ENCODE measurements at regions of chr6 and their contacts with region 1.

Region 1: DNA sequence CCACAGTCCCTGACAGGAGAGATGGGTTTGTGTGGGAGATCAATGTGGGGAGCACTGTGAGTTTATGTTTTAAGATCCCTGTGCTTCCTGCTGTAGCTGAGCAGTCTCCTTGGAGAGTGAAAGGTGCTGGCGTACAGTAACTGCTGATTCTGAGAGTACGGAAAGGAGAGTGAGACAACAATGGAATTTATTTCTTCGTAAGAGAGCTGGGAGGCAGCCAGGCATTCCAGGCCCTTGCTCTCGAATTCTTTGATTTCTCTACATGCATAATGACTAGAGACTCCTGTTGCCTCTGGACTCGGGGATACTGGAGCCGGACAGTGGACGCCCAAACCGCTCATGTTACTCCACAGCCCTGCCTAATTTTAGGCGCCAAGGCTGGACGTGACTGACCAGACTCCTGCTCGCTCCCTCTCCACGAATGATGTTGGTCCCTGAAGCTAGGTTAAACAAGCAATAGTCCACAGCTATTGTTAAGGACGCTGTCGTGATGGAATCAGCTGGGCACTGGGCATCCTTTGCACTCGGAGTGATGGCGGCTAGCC is 131.0 kb upstream of the PHACTR1 start:
- DNase-seq: peak; percentile 96
- H3K4me3 ChIP-seq: peak overlapping the region in 1 of 3 experiments; percentile 25
- H3K27ac ChIP-seq: peak overlapping the region; percentile 100
- H3K4me1 ChIP-seq: peaks cover 51% of the 10 kb centered on the region
- H3K27me3 ChIP-seq: no peaks in the 10 kb centered on the region
- CTCF ChIP-seq: no peak
- POLR2A ChIP-seq: peak; percentile 49

Region 2: GRCh38 chr6:11609315-11610071 is 976.1 kb before region 1 on chr6:
- CTCF ChIA-PET with region 1: no interaction called
- POLR2A ChIA-PET with region 1: interaction called, 4 read pairs
- dilution Hi-C with region 1: no loop called
- intact Hi-C with region 1: loop called (anchors 1 kb)
- DNase-seq: peak; percentile 99
- H3K4me3 ChIP-seq: peak overlapping the region in 2 of 3 experiments; percentile 30 to 86
- H3K27ac ChIP-seq: peak overlapping the region; percentile 99
- H3K4me1 ChIP-seq: peaks cover 78% of the 10 kb centered on the region
- H3K27me3 ChIP-seq: no peaks in the 10 kb centered on the region
- CTCF ChIP-seq: no peak
- POLR2A ChIP-seq: no peak

Region 3: GRCh38 chr6:12313992-12314805 is 271.4 kb before region 1 on chr6:
- CTCF ChIA-PET with region 1: interaction called, 3 read pairs
- POLR2A ChIA-PET with region 1: no interaction called
- dilution Hi-C with region 1: no loop called
- intact Hi-C with region 1: loop called (anchors 1 kb)
- DNase-seq: peak; percentile 89
- H3K4me3 ChIP-seq: no peak overlapping the region
- H3K27ac ChIP-seq: peak overlapping the region; percentile 77
- H3K4me1 ChIP-seq: peaks cover 23% of the 10 kb centered on the region
- H3K27me3 ChIP-seq: no peaks in the 10 kb centered on the region
- CTCF ChIP-seq: no peak
- POLR2A ChIP-seq: no peak

Region 4: GRCh38 chr6:12483712-12484111 is 101.9 kb before region 1 on chr6:
- CTCF ChIA-PET with region 1: interaction called, 5 read pairs
- POLR2A ChIA-PET with region 1: no interaction called
- dilution Hi-C with region 1: loop called (anchors 25 kb)
- intact Hi-C with region 1: loop called (anchors 1 kb)
- DNase-seq: peak; percentile 90
- H3K4me3 ChIP-seq: peak overlapping the region in 1 of 3 experiments; percentile 9
- H3K27ac ChIP-seq: peak overlapping the region; percentile 74
- H3K4me1 ChIP-seq: peaks cover 54% of the 10 kb centered on the region
- H3K27me3 ChIP-seq: no peaks in the 10 kb centered on the region
- CTCF ChIP-seq: no peak
- POLR2A ChIP-seq: peak; percentile 56

Region 5: DNA sequence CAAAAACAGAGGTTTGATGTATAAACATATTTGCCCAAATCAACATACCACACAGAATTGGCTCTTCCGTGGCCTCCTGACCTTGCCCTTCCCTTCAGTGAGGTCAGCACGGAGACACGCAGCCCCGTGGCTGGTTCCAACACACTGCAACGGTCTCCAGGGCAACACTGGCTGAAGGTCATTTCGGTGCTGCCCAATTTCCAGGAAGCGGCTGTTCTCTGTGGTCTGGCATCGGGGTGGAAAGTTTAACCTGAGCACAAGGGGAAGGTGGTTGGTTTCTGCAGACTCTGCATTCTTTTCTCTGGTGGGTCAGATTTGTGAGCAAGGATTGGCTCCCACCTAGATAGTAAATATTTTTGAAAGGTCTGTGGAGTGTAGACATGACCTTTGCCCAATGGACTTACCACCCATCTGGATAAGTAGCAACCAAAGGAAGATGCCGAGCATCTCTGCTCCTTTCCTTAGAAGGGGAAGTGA is 46.6 kb before region 1 on chr6:
- CTCF ChIA-PET with region 1: interaction called, 3 read pairs
- POLR2A ChIA-PET with region 1: interaction called, 4 read pairs
- dilution Hi-C with region 1: no loop called
- intact Hi-C with region 1: loop called (anchors 1 kb)
- DNase-seq: peak; percentile 89
- H3K4me3 ChIP-seq: no peak overlapping the region
- H3K27ac ChIP-seq: peak overlapping the region; percentile 87
- H3K4me1 ChIP-seq: peaks cover 51% of the 10 kb centered on the region
- H3K27me3 ChIP-seq: no peaks in the 10 kb centered on the region
- CTCF ChIP-seq: no peak
- POLR2A ChIP-seq: peak; percentile 38

Region 6: GRCh38 chr6:12555267-12555666 is 30.3 kb before region 1 on chr6:
- CTCF ChIA-PET with region 1: no interaction called
- POLR2A ChIA-PET with region 1: no interaction called
- dilution Hi-C with region 1: no loop called
- intact Hi-C with region 1: no loop called
- DNase-seq: no peak
- H3K4me3 ChIP-seq: no peak overlapping the region
- H3K27ac ChIP-seq: no peak overlapping the region
- H3K4me1 ChIP-seq: no peaks in the 10 kb centered on the region
- H3K27me3 ChIP-seq: no peaks in the 10 kb centered on the region
- CTCF ChIP-seq: no peak
- POLR2A ChIP-seq: no peak

Region 7: GRCh38 chr6:12572896-12573827 is 12.4 kb before region 1 on chr6:
- CTCF ChIA-PET with region 1: interaction called, 17 read pairs
- POLR2A ChIA-PET with region 1: interaction called, 17 read pairs
- dilution Hi-C with region 1: no loop called
- intact Hi-C with region 1: loop called (anchors 1 kb)
- DNase-seq: peak; percentile 92
- H3K4me3 ChIP-seq: peak overlapping the region in 1 of 3 experiments; percentile 13
- H3K27ac ChIP-seq: peak overlapping the region; percentile 92
- H3K4me1 ChIP-seq: peaks cover 75% of the 10 kb centered on the region
- H3K27me3 ChIP-seq: no peaks in the 10 kb centered on the region
- CTCF ChIP-seq: no peak
- POLR2A ChIP-seq: no peak

Region 8: GRCh38 chr6:12610862-12611261 is 25.3 kb after region 1 on chr6:
- CTCF ChIA-PET with region 1: no interaction called
- POLR2A ChIA-PET with region 1: no interaction called
- dilution Hi-C with region 1: no loop called
- intact Hi-C with region 1: no loop called
- DNase-seq: no peak
- H3K4me3 ChIP-seq: no peak overlapping the region
- H3K27ac ChIP-seq: no peak overlapping the region
- H3K4me1 ChIP-seq: peaks cover 21% of the 10 kb centered on the region
- H3K27me3 ChIP-seq: peaks cover 0 to 1% of the 10 kb centered on the region in 2 experiments
- CTCF ChIP-seq: no peak
- POLR2A ChIP-seq: no peak